Posterior cingulate gyrus (tissue), 11 donors: ENCODE measurements at regions of chr9 and their contacts with region 1.

Region 1: DNA sequence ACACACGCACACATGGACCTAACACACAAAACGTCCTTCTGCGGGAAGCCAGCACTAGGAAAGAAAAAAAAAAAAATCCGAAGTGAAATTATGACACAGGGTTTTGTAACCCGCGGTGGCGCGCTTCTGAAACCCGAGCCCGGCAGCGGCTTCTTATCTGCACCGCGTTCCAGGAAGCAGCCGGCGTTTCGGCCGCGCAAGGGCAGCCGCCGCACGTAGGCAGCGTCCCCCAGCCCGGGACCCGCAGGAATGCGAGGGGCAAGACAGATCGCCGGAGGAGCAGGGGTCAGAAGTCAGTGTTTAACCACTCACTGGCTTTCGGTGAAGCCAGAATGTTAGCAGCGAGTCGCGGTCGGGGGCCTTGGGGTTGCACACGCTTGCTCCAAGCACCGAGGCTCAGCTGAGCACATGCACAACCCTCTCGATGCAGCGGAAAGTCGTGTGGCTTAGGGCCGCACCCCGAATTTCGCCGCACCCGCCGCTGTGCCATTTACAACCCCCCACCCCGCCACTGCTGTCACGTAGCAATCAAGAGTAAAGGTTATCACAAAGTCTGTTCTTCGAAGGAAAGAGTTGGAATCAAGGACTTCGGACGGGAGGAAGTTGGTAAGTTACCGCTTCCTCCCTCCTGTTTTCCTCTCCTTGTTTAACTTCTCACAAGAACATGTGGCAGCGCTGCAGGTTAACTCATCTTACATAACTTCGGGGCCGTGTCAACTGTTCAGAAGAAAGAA is 167.9 kb downstream of the AUH start:
- DNase-seq: peak; percentile 40 to 92 (median 64)

Region 2: GRCh38 chr9:91361291-91362050 is 167.6 kb after region 1 on chr9 and contains the start of gene AUH:
- intact Hi-C with region 1: loop called (anchors 5 kb)
- DNase-seq: peak; percentile 76 to 98 (median 84)